Lower leg skin (tissue), 4 donors: ENCODE measurements at regions of chr16 and their contacts with region 1.

Region 1: DNA sequence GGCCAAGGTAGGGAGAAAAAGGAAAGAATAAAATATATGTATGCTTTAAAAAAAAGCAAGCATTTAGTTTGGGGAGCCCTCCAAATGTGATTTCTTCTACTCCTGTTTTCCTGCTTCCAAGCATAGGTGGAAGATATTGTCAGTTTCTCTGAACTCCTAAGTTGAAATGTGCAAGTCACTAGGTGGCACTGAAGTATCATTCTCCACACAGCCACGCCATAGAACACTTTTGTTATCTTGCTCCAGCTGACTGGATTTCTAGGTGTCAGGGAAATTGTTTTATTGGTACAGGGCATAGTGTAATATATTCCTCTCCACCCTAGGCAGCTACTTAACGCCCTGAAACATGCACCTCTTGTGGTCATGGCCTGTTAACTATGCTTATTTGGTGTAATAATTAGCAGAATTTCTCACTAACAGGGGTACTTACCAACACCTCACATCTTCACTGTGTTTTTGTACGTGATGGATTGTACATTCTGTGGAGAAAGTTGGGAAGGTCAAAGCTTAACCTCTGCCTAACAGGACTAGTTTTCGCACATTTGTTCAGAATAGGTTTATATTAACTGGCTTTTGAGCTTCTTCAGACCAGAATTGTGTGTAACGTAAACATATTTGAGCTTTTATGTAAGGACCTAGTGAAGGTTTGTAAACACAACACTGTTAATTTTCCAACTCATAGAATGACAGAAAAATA is 69.3 kb downstream of the FTO start:
- DNase-seq: peak in 1 of 2 donors; percentile 43
- H3K4me3 ChIP-seq: no peak overlapping the region
- CTCF ChIP-seq: no peak
- POLR2A ChIP-seq: no peak

Region 2: DNA sequence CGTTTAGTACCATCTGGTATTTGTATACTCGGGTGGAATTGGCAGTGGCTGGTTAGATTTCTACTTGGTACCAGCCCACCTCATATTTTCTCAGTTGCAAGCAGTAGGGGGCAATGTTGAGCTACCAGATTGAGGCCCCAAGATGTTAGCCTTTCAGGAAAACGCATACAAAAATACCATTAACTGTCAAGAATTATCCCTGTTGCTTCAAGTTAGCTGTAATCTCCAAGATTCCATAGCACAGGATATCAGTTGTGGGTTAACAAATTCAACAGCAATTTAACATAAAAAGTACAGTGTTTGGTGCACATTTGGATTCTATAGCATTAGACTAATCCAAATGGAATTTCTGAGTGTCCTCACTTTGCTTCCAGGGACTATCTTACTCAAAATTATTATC is 118.9 kb after region 1 on chr16:
- intact Hi-C with region 1: loop called (anchors 10 kb)
- DNase-seq: peak in 1 of 2 donors; percentile 33
- H3K4me3 ChIP-seq: no peak overlapping the region
- CTCF ChIP-seq: peak in 1 of 3 donors; percentile 36
- POLR2A ChIP-seq: no peak

Region 3: GRCh38 chr16:54929090-54930004 is 1156.0 kb after region 1 on chr16:
- intact Hi-C with region 1: loop called (anchors 5 kb)
- DNase-seq: peak; percentile 99 to 100
- H3K4me3 ChIP-seq: peak overlapping the region; percentile 92
- CTCF ChIP-seq: no peak
- POLR2A ChIP-seq: peak in 1 of 2 donors; percentile 35

Region 4: GRCh38 chr16:55264949-55265348 is 1491.7 kb after region 1 on chr16:
- intact Hi-C with region 1: loop called (anchors 10 kb)
- DNase-seq: peak in 1 of 2 donors; percentile 74
- H3K4me3 ChIP-seq: no peak overlapping the region
- CTCF ChIP-seq: no peak
- POLR2A ChIP-seq: no peak